ENCODE measurements at regions of chrX and their contacts with region 1.

Region 1: DNA sequence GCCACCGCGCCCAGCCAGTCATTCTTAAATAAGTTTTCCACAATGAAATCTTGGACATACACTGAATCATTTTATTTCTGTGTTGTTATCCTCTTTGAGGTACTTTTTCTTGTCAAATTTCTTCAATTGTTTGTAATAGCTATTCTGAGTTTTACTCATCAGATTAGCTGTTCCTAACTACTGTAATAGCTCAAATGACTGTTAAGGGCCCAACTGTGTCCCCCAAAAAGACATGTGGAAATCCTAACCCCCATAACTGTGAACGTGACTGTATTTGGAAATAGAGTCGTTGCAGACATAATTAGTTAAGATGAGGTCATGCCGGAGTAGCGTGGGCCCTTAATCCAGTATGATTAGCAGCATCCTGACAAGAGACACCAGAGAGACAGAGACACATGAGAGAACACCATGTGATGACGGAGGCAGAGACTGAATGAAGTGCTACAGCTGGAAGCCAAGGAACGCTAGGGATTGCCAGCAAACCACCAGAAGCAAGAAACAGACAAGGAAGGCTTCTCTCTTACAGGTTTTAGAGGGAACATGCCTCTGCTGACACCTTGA is 22.9 kb downstream of the ACOT9 start:
- DNase-seq: no peak
- ATAC-seq: no peak
- H3K4me3 ChIP-seq: no peak overlapping the region
- H3K27ac ChIP-seq: no peak overlapping the region
- H3K4me1 ChIP-seq: no peaks in the 10 kb centered on the region
- H3K27me3 ChIP-seq: no peaks in the 10 kb centered on the region
- CTCF ChIP-seq: no peak

Region 2: DNA sequence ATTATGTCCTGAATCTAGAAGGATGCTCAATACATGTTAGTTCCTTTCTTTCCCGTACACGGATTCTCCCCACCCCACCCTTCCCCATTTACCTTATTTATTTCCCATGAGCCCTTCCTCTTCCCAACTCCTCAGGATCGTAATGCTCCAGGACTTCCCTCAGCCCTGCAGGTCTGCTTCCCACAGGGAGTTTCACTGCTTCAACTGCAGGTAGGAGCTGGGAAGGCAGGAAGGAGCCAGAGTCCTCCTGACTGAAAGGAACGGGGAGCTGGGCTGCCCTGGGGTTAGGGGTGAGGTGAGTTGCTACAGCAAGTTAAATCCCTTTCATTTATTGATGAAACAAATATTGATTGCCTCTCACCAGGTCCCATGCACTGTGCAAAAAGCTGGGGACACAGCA is 96.0 kb after region 1 on chrX:
- CTCF ChIA-PET with region 1: no interaction called
- POLR2A ChIA-PET with region 1: interaction called, 10 read pairs
- in situ Hi-C with region 1: no loop called
- intact Hi-C with region 1: no loop called
- DNase-seq: no peak
- ATAC-seq: no peak
- H3K4me3 ChIP-seq: no peak overlapping the region
- H3K27ac ChIP-seq: 0 out of 2 replicates have a peak overlapping the region, but pooled peaks have one; percentile 29
- H3K4me1 ChIP-seq: no peaks in the 10 kb centered on the region
- H3K27me3 ChIP-seq: no peaks in the 10 kb centered on the region
- CTCF ChIP-seq: no peak